Heart right ventricle (tissue), 16 donors: ENCODE measurements at regions of chr9 and their contacts with region 1.

Region 1: GRCh38 chr9:124551472-124552272 is 44.5 kb upstream of the NR5A1 start:
- DNase-seq: peak in 1 of 2 donors; percentile 30
- ATAC-seq: peak in 7 of 8 donors; percentile 66 to 84 (median 75)
- H3K4me3 ChIP-seq: no peak overlapping the region
- H3K27ac ChIP-seq: no peak overlapping the region
- H3K4me1 ChIP-seq: peaks cover 0 to 10% (median 0%) of the 10 kb centered on the region in 9 donors
- H3K27me3 ChIP-seq: no peaks in the 10 kb centered on the region
- CTCF ChIP-seq: peak in 7 of 9 donors; percentile 47 to 70 (median 60)

Region 2: DNA sequence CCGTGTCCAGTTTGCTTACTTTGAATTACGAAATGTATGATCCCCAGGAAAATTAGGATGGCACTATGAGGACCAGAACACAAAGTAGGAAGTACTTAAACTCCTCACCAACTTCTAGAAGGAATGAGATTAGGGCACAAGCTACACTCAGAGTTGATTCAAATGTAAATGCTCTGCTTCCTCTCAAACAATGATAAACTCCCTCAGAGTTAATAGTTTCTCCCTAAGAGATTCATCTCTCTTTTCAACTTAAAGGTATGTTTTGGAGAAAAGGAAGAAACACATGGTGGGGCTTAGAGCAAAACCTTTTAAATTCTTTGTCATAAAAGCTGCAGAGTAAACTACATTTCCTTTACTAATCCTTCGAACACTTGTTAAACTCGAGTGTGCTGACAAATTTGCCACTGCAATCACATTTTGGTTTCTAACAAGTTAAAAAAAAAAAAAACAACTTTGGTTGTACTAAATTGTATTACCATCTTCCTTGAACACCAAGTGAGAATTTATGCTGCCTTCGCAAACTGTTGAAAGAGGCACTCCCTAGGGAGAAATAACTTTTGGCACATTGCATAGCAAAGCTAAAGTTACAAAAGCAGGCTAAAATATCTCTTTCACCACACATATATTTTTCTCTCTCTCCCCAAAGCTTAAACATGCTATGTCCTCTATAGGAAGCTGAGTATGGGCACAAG is 688.4 kb before region 1 on chr9:
- intact Hi-C with region 1: loop called in 1 of 10 experiments (anchors 5 kb)
- DNase-seq: no peak
- ATAC-seq: peak in 1 of 8 donors; percentile 48
- H3K4me3 ChIP-seq: no peak overlapping the region
- H3K27ac ChIP-seq: peak overlapping the region in 1 of 10 donors; percentile 41
- H3K4me1 ChIP-seq: peaks cover 0 to 69% (median 32%) of the 10 kb centered on the region in 9 donors
- H3K27me3 ChIP-seq: no peaks in the 10 kb centered on the region
- CTCF ChIP-seq: no peak

Region 3: DNA sequence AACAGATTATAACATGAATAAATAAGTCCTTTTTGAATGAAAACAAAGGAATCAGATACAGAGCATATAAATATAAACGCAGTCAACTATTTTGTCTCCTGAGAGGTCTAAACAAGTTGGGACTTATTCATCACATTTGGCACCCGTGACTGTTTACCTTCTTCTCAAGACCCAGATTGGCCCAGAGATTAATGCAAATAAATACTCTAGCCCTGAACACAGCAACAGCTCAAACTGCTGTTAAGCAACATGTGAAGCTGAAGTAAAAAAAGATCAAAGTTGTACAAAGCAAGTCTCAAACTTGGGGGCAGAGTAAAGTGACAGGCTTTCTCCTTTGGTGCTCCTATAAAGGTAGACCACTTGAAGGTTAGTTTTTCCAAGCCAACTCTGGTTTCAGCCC is 50.5 kb after region 1 on chr9:
- intact Hi-C with region 1: no loop called
- DNase-seq: no peak
- ATAC-seq: no peak
- H3K4me3 ChIP-seq: no peak overlapping the region
- H3K27ac ChIP-seq: no peak overlapping the region
- H3K4me1 ChIP-seq: no peaks in the 10 kb centered on the region
- H3K27me3 ChIP-seq: no peaks in the 10 kb centered on the region
- CTCF ChIP-seq: no peak

Region 4: DNA sequence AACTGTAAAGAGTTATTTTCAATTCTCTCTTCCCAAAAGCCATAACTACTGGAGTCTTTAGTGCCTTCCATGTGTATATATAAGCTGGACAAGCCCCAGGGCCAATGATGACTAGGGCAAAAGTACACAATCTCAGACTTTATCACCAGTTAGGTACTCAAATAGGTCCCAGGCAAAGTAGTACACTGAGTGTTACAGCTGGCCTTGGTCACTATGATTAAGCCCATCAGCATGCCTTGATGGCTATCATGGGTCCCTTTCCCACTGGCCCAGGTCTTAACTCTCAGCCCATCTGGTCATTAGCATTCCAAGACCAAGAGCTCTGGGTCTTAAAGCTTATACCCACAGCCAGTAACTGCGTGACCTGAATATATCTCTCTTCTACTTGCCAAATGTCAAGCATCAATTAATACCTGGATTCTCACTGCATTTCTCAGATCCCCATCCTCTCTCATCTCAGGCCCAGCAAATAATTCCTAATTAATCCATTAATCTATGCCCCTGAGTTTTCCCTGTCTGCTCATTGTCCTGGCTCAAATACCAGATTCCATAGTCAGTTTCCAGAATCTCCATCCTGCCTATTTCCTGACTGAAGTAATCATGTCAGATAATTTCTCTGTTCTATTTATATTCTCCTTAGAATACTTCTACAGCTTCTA is 157.1 kb after region 1 on chr9:
- intact Hi-C with region 1: loop called in 7 of 10 experiments (anchors 5 to 10 kb)
- DNase-seq: no peak
- ATAC-seq: no peak
- H3K4me3 ChIP-seq: no peak overlapping the region
- H3K27ac ChIP-seq: no peak overlapping the region
- H3K4me1 ChIP-seq: peaks cover 0 to 15% (median 4%) of the 10 kb centered on the region in 9 donors
- H3K27me3 ChIP-seq: no peaks in the 10 kb centered on the region
- CTCF ChIP-seq: no peak

Region 5: DNA sequence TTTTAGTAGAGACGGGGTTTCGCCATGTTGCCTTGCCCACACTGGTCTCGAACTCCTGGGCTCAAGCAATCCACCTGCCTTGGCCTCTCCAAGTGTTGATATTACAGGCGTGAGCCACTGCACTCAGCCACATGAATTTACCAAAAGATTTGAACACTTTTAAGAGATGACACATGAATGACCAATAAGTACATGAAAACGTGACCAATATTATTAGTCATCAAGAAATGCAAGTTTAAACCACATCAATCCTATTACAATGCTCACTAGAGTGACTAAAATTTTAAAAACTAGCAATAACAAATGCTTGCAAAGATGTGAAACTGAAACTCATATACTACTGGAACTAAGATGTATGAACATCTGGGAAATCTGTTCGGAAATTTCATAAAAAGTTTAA is 165.1 kb after region 1 on chr9:
- intact Hi-C with region 1: loop called in 7 of 10 experiments (anchors 5 to 10 kb)
- DNase-seq: no peak
- ATAC-seq: no peak
- H3K4me3 ChIP-seq: no peak overlapping the region
- H3K27ac ChIP-seq: no peak overlapping the region
- H3K4me1 ChIP-seq: peaks cover 0 to 13% (median 3%) of the 10 kb centered on the region in 9 donors
- H3K27me3 ChIP-seq: no peaks in the 10 kb centered on the region
- CTCF ChIP-seq: no peak

Region 6: GRCh38 chr9:124793015-124793541 is 241.4 kb after region 1 on chr9:
- intact Hi-C with region 1: no loop called
- DNase-seq: no peak
- ATAC-seq: peak in 5 of 8 donors; percentile 14 to 44 (median 28)
- H3K4me3 ChIP-seq: no peak overlapping the region
- H3K27ac ChIP-seq: peak overlapping the region in 4 of 10 donors; percentile 9 to 36 (median 24)
- H3K4me1 ChIP-seq: peaks cover 14 to 61% (median 39%) of the 10 kb centered on the region in 9 donors
- H3K27me3 ChIP-seq: no peaks in the 10 kb centered on the region
- CTCF ChIP-seq: no peak